Activated CD4-positive, alpha-beta memory T cell treated with anti-CD3 and anti-CD28 coated beads for 36 hours (primary cell): ENCODE measurements at regions of chr1 and their contacts with region 1.

Region 1: DNA sequence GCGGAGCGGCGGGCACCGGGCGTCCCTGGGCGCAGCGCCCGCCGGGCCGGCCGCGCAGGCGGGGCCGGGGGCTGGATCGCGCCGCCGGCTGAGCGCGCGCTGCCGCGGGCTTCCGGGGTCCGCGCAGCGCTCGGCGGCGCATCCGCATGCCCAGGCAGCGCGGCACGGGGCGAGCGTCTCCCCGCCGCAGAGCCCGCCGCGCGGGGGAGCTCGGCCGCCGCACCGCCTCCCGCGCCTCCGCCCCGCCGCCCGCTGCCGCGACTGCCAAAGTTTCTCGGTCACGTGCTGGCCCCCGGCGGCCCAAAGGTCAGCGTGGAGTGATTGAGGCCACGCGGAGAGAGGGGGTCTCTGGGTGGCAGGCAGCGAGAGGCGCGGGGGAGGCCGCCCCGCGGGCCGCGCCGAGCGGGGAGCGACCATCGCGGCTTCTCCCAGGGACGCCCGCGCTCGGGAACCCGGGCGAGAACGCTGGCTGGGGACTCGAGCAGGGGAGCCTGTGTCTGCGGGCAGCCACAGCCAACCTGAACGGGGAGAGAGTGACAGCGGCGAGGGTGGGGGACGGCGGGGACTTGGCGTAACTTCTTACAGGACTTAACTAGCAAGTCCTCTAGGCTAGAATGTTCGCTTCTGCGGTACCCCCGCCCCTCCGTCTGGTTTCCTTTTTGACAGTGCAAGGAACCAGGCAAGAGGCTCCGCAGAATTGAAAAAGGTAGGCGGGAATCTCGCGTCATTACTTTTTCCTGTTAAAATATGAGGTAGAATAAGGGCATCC is at the start of gene ILDR2:
- DNase-seq: peak; percentile 88
- H3K4me3 Mint-ChIP-seq: peak within 1 kb of the TSS; percentile 88
- H3K27ac Mint-ChIP-seq: peak within 1 kb of the TSS; percentile 88
- H3K4me1 Mint-ChIP-seq: peaks cover 47% of the 10 kb centered on the region
- H3K27me3 Mint-ChIP-seq: peaks cover 16% of the 10 kb centered on the region
- total RNA-seq, gene ILDR2: 12.5 to 13.0 TPM

Region 2: DNA sequence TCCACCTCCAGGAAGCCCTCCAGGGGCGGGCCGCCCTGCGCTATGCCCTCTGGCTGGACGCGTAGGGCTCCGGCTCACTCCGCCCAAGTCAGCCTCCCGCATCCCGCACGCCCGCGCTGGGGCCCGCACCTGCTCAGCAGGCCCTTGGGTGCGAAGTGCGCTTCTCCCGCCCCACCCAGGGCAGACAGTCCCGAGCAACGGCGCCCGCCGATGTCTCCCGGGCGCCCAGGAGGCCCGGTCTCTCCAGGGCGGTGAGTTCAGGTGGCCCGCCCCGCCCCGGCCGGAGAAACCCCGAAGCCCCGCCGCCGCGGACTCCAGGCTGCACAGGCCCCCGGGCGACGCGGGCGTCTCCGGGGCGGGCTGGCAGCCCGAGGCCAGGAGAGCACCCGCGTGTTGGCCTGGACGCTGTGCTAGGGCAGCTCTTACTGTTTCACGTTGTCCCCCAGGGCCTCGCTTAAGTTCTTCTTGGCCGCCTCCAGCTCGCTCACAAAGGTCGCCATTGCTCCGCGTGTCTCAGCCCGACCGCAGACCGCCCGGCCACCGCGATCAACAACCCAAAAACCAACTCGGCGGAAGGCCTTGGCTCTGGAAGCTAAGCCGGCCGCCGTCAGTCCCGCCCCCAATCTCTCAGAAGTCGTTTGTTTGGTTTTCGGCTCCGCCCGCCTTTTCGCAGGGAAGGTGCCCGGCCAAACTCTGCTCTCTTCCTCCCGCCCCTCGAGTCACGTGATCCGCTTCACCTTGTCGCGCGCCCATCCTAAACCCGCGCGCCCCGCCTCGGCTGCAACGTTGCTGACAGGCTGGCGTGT is 99.6 kb before region 1 on chr1 and contains the start of gene TADA1:
- CTCF ChIA-PET with region 1: no interaction called
- POLR2A ChIA-PET with region 1: no interaction called
- intact Hi-C with region 1: loop called (anchors 1 kb)
- DNase-seq: peak; percentile 100
- H3K4me3 Mint-ChIP-seq: peak within 1 kb of the TSS; percentile 96
- H3K27ac Mint-ChIP-seq: peak within 1 kb of the TSS; percentile 97
- H3K4me1 Mint-ChIP-seq: peaks cover 47% of the 10 kb centered on the region
- H3K27me3 Mint-ChIP-seq: no peaks in the 10 kb centered on the region
- total RNA-seq, gene TADA1: 16.9 to 18.3 TPM

Region 3: GRCh38 chr1:167043752-167044488 is 68.4 kb after region 1 on chr1:
- CTCF ChIA-PET with region 1: no interaction called
- POLR2A ChIA-PET with region 1: no interaction called
- intact Hi-C with region 1: loop called (anchors 1 kb)
- DNase-seq: peak; percentile 88
- H3K4me3 Mint-ChIP-seq: peak overlapping the region; percentile 72
- H3K27ac Mint-ChIP-seq: peak overlapping the region; percentile 70
- H3K4me1 Mint-ChIP-seq: peaks cover 15% of the 10 kb centered on the region
- H3K27me3 Mint-ChIP-seq: peaks cover 8% of the 10 kb centered on the region

Region 4: GRCh38 chr1:167210966-167211674 is 235.6 kb after region 1 on chr1:
- CTCF ChIA-PET with region 1: no interaction called
- POLR2A ChIA-PET with region 1: no interaction called
- intact Hi-C with region 1: no loop called
- DNase-seq: peak; percentile 20
- H3K4me3 Mint-ChIP-seq: no peak overlapping the region
- H3K27ac Mint-ChIP-seq: peak overlapping the region; percentile 59
- H3K4me1 Mint-ChIP-seq: peaks cover 34% of the 10 kb centered on the region
- H3K27me3 Mint-ChIP-seq: peaks cover 6% of the 10 kb centered on the region